ENCODE measurements at regions of chr16 and their contacts with region 1.

Region 1: GRCh38 chr16:55701442-55702319 is 45.9 kb downstream of the SLC6A2 start:
- DNase-seq: no peak

Region 2: GRCh38 chr16:55465077-55465896 is 236.4 kb before region 1 on chr16:
- intact Hi-C with region 1: loop called (anchors 2 kb)
- DNase-seq: peak; percentile 93

Region 3: DNA sequence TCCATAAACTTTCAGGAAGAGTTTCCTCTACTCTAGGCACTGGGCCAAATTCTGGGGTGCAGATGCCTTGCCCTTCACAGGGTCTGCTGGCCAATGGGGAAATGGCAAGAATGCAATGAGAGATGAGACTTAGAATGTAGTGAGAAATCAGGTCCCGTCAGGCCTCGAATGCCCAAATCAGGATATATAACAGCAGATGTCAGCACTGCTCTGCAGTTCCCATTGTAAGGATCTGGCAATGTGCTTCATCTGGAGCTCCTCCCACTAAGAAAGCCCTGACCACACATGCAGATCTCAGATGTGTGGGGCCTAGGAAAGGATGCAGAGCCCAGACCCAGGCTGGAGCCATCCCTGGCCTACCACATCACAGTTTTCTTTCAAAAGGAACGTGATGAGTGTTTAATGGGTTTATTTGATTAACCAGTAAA is 206.7 kb before region 1 on chr16:
- intact Hi-C with region 1: loop called (anchors 10 kb)
- DNase-seq: no peak

Region 4: GRCh38 chr16:55508941-55509931 is 192.4 kb before region 1 on chr16 and contains the start of gene LPCAT2:
- intact Hi-C with region 1: no loop called
- DNase-seq: peak; percentile 94
- total RNA-seq, gene LPCAT2: 8.5 TPM

Region 5: DNA sequence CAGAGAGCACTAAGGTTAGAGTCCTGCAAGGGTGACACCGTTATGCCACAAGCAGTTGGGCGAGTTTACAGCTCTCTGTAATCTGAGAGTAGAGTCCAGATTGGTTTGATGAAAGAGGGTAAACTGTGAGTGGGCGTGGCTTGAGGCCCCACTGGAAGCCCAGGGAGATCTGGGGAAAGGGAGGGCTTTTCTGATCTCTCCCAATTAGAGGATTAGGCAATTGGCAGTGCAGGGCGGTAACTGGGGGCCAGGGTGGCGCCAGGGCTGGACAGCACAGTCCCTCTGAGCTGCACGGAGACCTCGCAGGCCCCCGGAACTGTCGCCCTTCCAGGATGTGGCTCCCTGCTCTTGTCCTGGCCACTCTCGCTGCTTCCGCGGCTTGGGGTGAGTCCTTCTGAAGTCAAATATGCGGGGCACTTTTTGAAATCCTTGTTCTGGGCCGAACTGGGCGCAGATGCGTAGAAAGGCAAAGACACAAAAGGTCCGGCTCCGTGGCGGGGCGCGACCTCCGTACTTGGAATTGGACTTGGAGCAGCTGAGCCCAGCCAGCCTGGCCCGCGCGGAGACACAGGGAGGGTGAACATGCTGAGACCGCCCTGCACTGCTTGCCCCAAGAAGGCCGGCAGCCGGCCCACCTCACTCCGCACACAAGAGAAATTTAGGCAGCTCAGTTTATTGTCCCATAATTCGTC is 58.8 kb after region 1 on chr16:
- intact Hi-C with region 1: no loop called
- DNase-seq: no peak